ENCODE measurements at regions of chr3 and their contacts with region 1.

Region 1: GRCh38 chr3:9902372-9903237 is at the start of gene IL17RE:
- DNase-seq: no peak
- H3K4me3 Mint-ChIP-seq: peak within 1 kb of the TSS; percentile 60
- H3K27ac Mint-ChIP-seq: peak within 1 kb of the TSS; percentile 75
- H3K4me1 Mint-ChIP-seq: peaks cover 35% of the 10 kb centered on the region
- H3K27me3 Mint-ChIP-seq: peaks cover 2% of the 10 kb centered on the region
- total RNA-seq, gene IL17RE: 1.7 to 3.0 TPM

Region 2: GRCh38 chr3:9852549-9852948 is 50.1 kb before region 1 on chr3:
- CTCF ChIA-PET with region 1: no interaction called
- POLR2A ChIA-PET with region 1: no interaction called
- DNase-seq: no peak
- H3K4me3 Mint-ChIP-seq: no peak overlapping the region
- H3K27ac Mint-ChIP-seq: no peak overlapping the region
- H3K4me1 Mint-ChIP-seq: peaks cover 12% of the 10 kb centered on the region
- H3K27me3 Mint-ChIP-seq: peaks cover 7% of the 10 kb centered on the region

Region 3: DNA sequence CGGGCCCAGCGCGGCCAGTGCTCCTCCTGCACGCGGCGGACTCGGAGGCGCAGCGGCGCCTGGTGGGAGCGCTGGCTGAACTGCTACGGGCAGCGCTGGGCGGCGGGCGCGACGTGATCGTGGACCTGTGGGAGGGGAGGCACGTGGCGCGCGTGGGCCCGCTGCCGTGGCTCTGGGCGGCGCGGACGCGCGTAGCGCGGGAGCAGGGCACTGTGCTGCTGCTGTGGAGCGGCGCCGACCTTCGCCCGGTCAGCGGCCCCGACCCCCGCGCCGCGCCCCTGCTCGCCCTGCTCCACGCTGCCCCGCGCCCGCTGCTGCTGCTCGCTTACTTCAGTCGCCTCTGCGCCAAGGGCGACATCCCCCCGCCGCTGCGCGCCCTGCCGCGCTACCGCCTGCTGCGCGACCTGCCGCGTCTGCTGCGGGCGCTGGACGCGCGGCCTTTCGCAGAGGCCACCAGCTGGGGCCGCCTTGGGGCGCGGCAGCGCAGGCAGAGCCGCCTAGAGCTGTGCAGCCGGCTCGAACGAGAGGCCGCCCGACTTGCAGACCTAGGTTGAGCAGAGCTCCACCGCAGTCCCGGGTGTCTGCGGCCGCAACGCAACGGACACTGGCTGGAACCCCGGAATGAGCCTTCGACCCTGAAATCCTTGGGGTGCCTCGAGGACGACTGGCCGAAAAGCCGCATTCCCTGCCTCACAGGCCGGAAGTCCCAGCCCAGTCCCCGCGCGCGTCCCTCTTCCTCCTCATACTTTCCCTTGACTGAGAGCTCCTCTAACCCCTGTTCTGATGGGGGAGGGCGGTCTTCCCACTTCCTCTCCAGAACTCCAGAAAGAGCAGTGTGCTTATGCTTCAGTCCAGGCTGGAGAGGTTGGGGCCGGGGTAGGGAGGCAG is 12.9 kb after region 1 on chr3:
- CTCF ChIA-PET with region 1: interaction called, 6 read pairs
- POLR2A ChIA-PET with region 1: interaction called, 17 read pairs
- DNase-seq: peak; percentile 40
- H3K4me3 Mint-ChIP-seq: peak overlapping the region; percentile 58
- H3K27ac Mint-ChIP-seq: no peak overlapping the region
- H3K4me1 Mint-ChIP-seq: peaks cover 17% of the 10 kb centered on the region
- H3K27me3 Mint-ChIP-seq: peaks cover 14% of the 10 kb centered on the region

Region 4: GRCh38 chr3:10140996-10141546 is 238.5 kb after region 1 on chr3:
- CTCF ChIA-PET with region 1: no interaction called
- POLR2A ChIA-PET with region 1: no interaction called
- DNase-seq: no peak
- H3K4me3 Mint-ChIP-seq: peak overlapping the region; percentile 85
- H3K27ac Mint-ChIP-seq: peak overlapping the region; percentile 96
- H3K4me1 Mint-ChIP-seq: peaks cover 34% of the 10 kb centered on the region
- H3K27me3 Mint-ChIP-seq: no peaks in the 10 kb centered on the region

Measured in activated CD4-positive, alpha-beta memory T cell treated with anti-CD3 and anti-CD28 coated beads, Interleukin-2, amount 10 ng/mL, durations not matched to agents 7 days and 5 days (primary cell).